ENCODE measurements at regions of chr22 and their contacts with region 1.

Region 1: GRCh38 chr22:23591201-23591791 is 11.2 kb upstream of the IGLL1 start:
- DNase-seq: peak; percentile 56
- ATAC-seq: peak; percentile 69
- H3K4me3 Mint-ChIP-seq: no peak overlapping the region
- H3K27ac Mint-ChIP-seq: no peak overlapping the region
- H3K4me1 Mint-ChIP-seq: no peaks in the 10 kb centered on the region
- H3K27me3 Mint-ChIP-seq: peaks cover 2% of the 10 kb centered on the region
- CTCF ChIP-seq: no peak

Region 2: GRCh38 chr22:23248583-23248982 is 342.7 kb before region 1 on chr22:
- CTCF ChIA-PET with region 1: no interaction called
- POLR2A ChIA-PET with region 1: no interaction called
- intact Hi-C with region 1: no loop called
- DNase-seq: no peak
- ATAC-seq: no peak
- H3K4me3 Mint-ChIP-seq: no peak overlapping the region
- H3K27ac Mint-ChIP-seq: no peak overlapping the region
- H3K4me1 Mint-ChIP-seq: peaks cover 24% of the 10 kb centered on the region
- H3K27me3 Mint-ChIP-seq: no peaks in the 10 kb centered on the region
- CTCF ChIP-seq: no peak

Region 3: GRCh38 chr22:23402275-23403151 is 188.8 kb before region 1 on chr22:
- CTCF ChIA-PET with region 1: no interaction called
- POLR2A ChIA-PET with region 1: no interaction called
- intact Hi-C with region 1: loop called (anchors 5 kb)
- DNase-seq: peak; percentile 55
- ATAC-seq: peak; percentile 96
- H3K4me3 Mint-ChIP-seq: peak overlapping the region; percentile 58
- H3K27ac Mint-ChIP-seq: no peak overlapping the region
- H3K4me1 Mint-ChIP-seq: no peaks in the 10 kb centered on the region
- H3K27me3 Mint-ChIP-seq: no peaks in the 10 kb centered on the region
- CTCF ChIP-seq: no peak

Region 4: DNA sequence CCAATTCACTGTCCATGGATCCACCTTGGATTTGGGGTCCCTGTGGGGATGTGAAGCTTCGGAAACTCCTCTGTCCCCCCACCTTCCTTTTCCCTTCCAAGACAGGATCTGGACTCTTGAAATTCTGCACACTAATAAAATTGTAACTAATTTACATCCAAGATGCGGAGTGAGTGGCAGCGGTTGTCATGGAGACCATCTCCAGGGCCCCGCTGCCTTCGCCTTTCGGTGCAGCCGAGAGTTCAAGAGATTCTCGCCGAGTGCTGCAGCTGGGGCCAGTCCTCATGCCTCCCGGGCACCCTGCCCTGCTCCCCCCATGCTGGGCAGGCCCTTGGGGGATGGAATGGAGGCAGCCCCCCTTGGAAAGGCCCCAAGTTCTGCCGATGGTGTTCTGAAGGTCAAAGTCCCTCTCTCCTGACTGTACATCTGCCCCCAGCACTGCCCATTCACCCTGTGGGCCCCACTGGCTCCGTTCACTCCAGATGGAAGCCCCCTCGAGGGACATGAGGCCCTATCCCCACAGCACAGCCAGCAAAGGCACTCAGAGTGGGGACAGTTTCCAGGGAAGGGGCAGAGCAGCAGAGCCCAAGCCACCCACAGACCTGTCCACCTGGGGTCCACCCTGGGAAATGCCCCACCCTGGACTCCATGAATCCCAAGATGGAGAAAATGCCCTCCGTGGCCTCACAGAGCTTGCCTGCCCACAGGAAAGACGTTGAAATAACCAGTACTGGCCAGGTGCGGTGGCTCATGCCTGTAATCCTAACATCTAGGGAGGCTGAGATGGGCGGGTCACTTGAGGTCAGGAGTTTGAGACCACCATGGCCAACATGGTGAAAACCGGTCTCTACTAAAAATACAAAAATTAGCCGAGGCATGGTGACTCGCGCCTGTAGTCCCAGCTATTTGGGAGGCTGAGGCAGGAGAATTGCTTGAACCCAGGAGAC is 37.1 kb before region 1 on chr22:
- CTCF ChIA-PET with region 1: no interaction called
- POLR2A ChIA-PET with region 1: no interaction called
- intact Hi-C with region 1: no loop called
- DNase-seq: no peak
- ATAC-seq: no peak
- H3K4me3 Mint-ChIP-seq: no peak overlapping the region
- H3K27ac Mint-ChIP-seq: no peak overlapping the region
- H3K4me1 Mint-ChIP-seq: no peaks in the 10 kb centered on the region
- H3K27me3 Mint-ChIP-seq: peaks cover 14% of the 10 kb centered on the region
- CTCF ChIP-seq: no peak